ENCODE measurements at regions of chr6 and their contacts with region 1.

Region 1: DNA sequence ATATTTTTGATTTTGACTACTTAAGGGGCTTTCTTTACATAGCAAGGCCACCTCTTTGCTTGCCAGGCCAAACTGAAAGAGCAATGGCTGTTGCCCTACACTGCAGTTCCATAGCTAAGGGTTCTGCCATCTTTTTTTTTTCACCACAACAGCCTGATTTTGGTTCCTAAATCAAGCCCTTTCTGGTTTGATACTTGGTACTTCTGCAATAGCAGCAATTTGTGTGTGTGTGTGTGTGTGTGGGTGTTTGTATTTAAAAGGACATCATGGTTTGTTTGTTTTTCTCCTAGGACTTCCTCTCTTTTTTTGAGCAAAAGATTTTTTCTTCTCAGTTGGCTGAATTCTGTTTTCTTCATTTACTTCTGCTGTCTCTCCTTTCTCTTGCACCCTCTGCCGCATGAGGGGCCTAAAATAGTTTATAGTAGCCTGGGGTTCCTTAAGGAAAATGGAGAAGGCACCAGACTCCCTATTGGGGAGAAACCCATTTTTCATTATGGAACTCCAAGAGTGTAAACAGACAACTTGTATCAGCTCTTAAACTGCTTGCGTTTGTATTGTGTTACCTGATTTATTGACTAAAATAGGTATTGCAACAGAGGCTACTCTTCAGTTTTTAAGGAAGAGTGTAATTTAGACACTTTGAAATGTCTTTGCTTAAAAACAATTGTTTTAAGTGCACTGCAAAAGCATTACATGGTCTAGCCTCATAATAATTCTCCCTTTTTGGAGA is 12.2 kb upstream of the GCLC start:
- DNase-seq: no peak
- H3K4me3 ChIP-seq: no peak overlapping the region
- H3K27ac ChIP-seq: no peak overlapping the region
- H3K4me1 ChIP-seq: no peaks in the 10 kb centered on the region
- H3K27me3 ChIP-seq: no peaks in the 10 kb centered on the region
- CTCF ChIP-seq: no peak

Region 2: DNA sequence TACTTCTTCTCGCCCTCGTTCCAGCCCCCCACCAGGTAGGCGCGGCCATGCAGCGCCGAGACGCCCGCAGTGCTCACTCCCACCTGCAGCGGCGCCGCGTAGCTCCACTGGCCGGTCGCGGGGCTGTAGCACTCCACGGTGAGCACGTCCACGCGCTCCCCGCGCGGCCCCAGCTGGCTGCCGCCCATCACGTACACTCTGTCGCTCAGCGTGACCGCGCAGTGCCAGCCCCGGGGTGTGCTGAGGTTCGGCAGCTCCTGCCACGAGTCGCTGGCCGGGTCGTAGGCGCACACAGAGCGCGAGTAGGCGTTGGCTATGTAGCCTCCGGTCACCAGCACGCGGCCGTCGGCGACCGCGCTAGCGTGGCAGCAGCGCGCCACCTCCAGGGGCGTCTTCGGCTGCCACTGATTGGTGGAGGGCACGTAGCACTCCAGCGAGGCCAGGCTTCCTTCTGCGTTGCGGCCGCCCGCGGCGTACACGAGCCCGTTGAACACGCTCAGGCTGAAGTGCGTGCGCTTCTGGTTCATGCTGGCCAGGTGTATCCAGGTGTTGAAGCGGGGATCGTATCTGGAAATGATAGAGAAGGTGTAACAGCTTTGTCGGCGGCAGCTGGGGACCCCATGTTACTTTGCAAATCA is 94.7 kb after region 1 on chr6:
- intact Hi-C with region 1: loop called (anchors 10 kb)
- DNase-seq: peak; percentile 55 to 83
- H3K4me3 ChIP-seq: peak overlapping the region; percentile 49 to 61
- H3K27ac ChIP-seq: peak overlapping the region in 1 of 2 donors; percentile 9
- H3K4me1 ChIP-seq: peaks cover 0 to 13% (median 7%) of the 10 kb centered on the region in 4 donors
- H3K27me3 ChIP-seq: no peaks in the 10 kb centered on the region
- CTCF ChIP-seq: peak; percentile 11 to 24